ENCODE measurements at regions of chr15 and their contacts with region 1.

Region 1: DNA sequence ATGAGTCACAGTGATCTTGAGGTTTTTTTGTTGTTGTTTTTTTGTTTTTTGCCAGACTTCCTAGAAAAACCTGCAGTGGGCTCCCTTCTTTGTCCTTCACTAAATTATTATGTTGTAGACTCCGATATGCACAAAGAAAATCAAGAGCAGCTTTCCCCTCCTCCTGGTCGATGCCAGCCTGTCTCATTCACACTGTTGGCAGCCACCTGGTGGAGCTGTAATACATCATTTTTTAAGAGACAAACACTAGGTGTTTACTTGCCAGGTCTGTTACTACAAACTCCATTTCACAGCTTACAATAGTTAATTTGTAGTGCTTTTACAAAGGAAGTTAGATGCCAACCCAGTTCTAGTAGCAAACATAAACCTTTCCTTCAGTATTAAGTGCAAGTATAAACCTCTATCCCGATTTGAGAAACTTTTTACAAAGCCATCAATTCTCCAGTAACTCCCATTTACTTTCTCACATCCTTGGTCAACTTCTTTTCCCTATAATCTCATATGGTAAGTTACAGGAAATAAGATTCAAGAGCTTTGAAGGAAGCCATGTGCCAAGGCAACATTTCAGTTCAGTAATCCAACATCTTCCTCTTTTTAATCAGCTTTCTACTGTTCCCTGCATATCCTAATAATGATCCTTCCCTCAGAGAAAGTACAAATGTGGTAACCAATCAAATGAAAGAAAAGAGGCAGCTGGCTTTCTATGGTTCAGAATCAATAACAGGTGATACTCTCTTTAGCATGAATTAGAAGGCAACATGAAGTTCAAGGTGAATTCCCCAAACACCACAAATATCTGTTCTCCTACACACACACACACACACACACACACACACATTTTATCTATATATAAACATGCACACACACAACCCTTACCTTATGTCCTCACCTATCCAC is 14.0 kb downstream of the AAGAB start:
- DNase-seq: peak; percentile 13
- ATAC-seq: peak; percentile 62; the same call in 2 of the 3 replicates
- H3K4me3 ChIP-seq: no peak overlapping the region
- H3K27ac ChIP-seq: no peak overlapping the region
- H3K4me1 ChIP-seq: no peaks in the 10 kb centered on the region
- H3K27me3 ChIP-seq: no peaks in the 10 kb centered on the region
- CTCF ChIP-seq: peak; percentile 60
- EP300 ChIP-seq: no peak
- POLR2A ChIP-seq: no peak
- RAD21 ChIP-seq: 0 out of 2 replicates have a peak, but pooled peaks have one; percentile 11

Region 2: DNA sequence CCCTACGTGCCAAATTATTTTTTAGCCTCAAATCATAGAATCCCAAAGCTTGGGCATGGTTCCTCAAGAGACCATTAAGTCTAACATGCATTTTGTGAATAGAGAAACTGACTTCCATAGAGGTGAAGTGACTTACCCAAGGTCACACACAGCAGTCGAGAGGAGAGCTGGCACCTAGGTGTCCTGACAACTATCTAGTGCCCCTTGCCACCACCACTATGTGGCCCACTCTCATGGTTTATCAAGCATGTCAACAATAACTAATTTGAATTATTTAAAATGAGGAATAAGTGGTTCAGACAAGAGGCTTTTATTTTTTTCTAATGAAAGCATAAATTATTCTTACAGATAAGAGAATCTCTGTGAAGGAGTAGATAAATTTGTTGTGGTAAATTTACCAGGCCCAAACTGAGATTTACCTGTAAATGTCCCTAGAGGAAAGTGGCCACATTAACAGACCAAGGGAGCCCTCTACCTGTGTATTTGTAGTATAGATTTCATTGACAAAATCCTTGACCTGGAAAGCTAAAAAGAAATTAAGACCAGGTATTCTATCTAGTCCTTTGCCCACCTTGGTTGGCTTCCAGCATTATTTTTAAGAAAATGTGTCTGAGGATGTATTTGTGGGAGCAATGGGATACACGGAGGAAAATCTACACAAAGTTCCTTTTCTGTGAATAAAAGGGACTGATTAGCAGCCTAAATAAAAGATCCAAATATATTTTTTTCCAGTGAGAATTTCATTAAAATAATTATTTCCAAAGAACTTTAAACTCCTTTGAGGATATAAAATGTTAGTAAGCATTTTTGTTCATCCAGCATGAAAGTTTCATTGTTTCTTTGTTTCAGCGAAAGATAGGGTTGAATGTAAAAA is 63.2 kb after region 1 on chr15:
- CTCF ChIA-PET with region 1: interaction called, 3 read pairs
- POLR2A ChIA-PET with region 1: no interaction called
- in situ Hi-C with region 1: no loop called
- intact Hi-C with region 1: loop called (anchors 1 kb)
- DNase-seq: peak; percentile 49
- ATAC-seq: peak; percentile 64
- H3K4me3 ChIP-seq: no peak overlapping the region
- H3K27ac ChIP-seq: no peak overlapping the region
- H3K4me1 ChIP-seq: no peaks in the 10 kb centered on the region
- H3K27me3 ChIP-seq: no peaks in the 10 kb centered on the region
- CTCF ChIP-seq: peak; percentile 70
- EP300 ChIP-seq: no peak
- POLR2A ChIP-seq: no peak
- RAD21 ChIP-seq: peak; percentile 45; the same call in 1 of the 2 replicates